Posterior vena cava (tissue), 2 donors: ENCODE measurements at regions of chr14 and their contacts with region 1.

Region 1: GRCh38 chr14:61252369-61253063 is 28.6 kb downstream of the TMEM30B start:
- DNase-seq: peak; percentile 85

Region 2: GRCh38 chr14:60622917-60623257 is 629.6 kb before region 1 on chr14:
- intact Hi-C with region 1: loop called (anchors 5 kb)
- DNase-seq: no peak

Region 3: DNA sequence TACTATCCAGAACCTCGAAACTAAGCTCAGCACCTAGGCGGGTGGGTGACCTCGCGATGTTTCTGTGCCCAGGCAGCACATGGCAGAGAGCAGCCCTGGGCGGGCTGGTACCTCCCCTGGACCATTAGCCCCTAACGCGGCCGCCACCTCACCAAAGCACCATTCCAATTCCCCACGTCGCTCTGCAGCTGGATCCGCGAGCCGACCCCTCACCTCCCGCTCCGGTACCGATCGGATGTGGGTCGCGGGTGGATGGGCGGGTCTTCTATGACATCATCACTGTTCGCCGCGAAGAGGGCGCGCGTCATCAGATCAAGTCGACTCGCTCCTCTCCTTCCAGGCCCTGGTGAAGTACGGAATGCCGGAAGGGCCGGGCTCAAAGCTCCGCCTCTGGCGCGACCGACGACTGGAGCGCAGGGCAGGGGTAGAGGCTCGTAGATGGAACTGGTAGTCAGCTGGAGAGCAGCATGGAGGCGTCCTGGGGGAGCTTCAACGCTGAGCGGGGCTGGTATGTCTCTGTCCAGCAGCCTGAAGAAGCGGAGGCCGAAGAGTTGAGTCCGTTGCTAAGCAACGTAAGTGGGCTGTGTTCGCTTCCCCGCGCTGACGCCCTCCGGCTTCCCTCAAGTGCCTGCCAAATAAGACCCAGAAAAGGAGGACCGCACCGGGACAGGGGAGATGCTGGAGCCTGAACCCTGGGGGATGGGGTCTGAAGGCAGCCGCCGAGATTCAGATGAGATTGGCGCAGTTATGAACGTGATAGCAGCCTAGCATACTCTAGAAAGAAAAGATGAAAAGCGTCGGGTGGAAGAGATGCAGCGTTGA is 271.5 kb before region 1 on chr14 and contains the starts of genes SLC38A6 and TRMT5:
- intact Hi-C with region 1: no loop called
- DNase-seq: peak; percentile 98
- total RNA-seq, gene SLC38A6: 15.8 to 20.9 TPM
- total RNA-seq, gene TRMT5: 13.0 to 13.4 TPM

Region 4: GRCh38 chr14:61269321-61270083 is 17.0 kb after region 1 on chr14:
- intact Hi-C with region 1: no loop called
- DNase-seq: peak; percentile 85

Region 5: DNA sequence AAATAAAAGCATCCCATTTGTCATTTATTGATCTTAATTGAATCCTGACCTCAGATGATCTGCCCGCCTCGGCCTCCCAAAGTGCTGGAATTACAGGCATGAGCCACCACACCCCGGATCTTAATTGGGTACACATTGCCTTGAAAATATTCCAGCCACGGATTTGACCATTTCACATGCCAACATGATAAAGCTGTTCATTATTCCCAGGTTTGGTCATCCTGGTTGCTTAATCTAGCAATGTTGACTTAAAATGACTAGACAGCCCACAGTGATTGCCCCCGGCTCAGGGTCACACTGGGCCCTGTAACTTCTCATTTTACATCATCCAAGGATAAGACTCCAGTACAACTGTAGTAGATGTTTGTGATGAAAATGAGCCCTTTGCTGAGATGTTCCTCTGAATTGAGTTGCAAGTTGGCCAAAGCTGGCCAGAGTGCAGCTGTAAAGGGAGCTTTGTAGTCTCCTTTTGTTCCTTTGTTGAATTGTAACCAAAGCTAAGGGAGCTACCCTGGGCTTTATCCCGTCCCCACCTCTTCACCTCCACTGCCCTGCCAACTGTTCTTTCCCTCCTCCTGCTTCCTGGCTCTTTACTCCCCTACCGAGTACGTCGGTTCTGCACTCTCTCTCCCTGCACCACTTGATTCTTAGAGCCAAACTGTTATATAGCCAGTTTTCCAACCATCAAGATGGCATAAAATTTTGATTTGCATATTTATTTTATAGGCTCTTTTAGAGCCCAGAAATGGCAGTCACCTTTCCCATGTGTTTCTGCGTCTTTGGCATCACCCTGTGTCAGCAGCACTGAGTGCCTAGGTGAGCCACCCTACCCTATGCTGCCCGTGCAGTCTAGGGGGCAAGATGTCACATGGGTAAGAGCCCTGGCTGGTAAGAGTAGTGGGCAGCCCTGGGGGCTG is 301.5 kb after region 1 on chr14:
- intact Hi-C with region 1: no loop called
- DNase-seq: no peak